ENCODE measurements at regions of chr7 and their contacts with region 1.

Region 1: GRCh38 chr7:134900166-134900982 is 85.9 kb upstream of the AGBL3 start:
- DNase-seq: no peak
- H3K4me3 ChIP-seq: no peak overlapping the region
- H3K27ac ChIP-seq: peak overlapping the region; percentile 52 to 88 (median 74)
- H3K4me1 ChIP-seq: peaks cover 0 to 79% (median 71%) of the 10 kb centered on the region in 4 donors
- H3K27me3 ChIP-seq: no peaks in the 10 kb centered on the region
- CTCF ChIP-seq: no peak
- EP300 ChIP-seq: no peak
- POLR2A ChIP-seq: no peak

Region 2: GRCh38 chr7:134946260-134946659 is 45.9 kb after region 1 on chr7:
- intact Hi-C with region 1: loop called (anchors 5 kb)
- DNase-seq: no peak
- H3K4me3 ChIP-seq: no peak overlapping the region
- H3K27ac ChIP-seq: peak overlapping the region in 3 of 4 donors; percentile 21 to 86 (median 33)
- H3K4me1 ChIP-seq: peaks cover 0 to 25% (median 10%) of the 10 kb centered on the region in 4 donors
- H3K27me3 ChIP-seq: no peaks in the 10 kb centered on the region
- CTCF ChIP-seq: no peak
- EP300 ChIP-seq: no peak
- POLR2A ChIP-seq: no peak

Measured in sigmoid colon (tissue), 7 donors.